ENCODE measurements at regions of chr3 and their contacts with region 1.

Region 1: DNA sequence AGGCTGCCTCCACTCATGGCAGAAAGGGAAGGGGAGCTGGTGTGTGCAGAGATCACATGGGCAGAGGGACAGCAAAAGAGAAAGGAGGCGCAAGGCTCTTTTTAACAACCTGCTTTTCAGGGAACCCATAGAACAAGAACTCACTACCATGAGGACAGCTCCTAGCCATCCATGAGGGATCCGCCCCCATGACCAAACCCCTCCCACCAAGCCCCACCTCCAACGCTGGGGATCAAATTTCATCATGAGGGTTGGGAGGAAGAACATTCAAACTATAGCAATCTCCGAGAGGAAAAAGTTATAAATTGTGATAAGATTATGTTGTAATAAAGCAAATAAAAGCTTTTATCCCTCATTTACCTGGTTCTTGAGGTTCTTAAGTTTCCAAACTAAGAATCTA is 84.7 kb upstream of the LMCD1 start:
- DNase-seq: peak; percentile 4
- H3K4me3 ChIP-seq: no peak overlapping the region
- H3K27ac ChIP-seq: no peak overlapping the region
- H3K4me1 ChIP-seq: no peaks in the 10 kb centered on the region
- CTCF ChIP-seq: no peak

Region 2: GRCh38 chr3:8111069-8111798 is 305.7 kb before region 1 on chr3:
- CTCF ChIA-PET with region 1: no interaction called
- POLR2A ChIA-PET with region 1: no interaction called
- intact Hi-C with region 1: loop called (anchors 10 kb)
- DNase-seq: peak; percentile 59
- H3K4me3 ChIP-seq: no peak overlapping the region
- H3K27ac ChIP-seq: no peak overlapping the region
- H3K4me1 ChIP-seq: peaks cover 4% of the 10 kb centered on the region
- CTCF ChIP-seq: peak; percentile 85

Region 3: DNA sequence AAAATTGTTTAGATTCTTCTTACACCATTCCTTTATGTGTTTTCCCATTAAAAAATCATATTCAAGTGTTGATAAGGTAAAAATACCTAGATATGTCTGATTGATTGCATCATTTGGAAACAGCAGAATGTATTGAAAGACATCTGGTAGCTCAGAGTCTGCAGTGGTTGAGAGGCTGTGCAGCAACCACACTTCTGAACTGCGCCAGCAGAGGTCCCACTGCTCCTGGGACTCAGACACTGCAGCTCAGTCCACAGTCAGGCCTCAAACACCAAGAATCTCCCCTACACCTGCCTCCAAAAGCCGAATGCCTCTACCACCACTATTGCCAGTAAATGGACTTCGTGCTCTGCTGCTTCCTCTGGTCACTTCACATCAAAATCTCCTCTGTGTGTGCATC is 92.2 kb before region 1 on chr3:
- CTCF ChIA-PET with region 1: interaction called, 8 read pairs
- POLR2A ChIA-PET with region 1: interaction called, 5 read pairs
- intact Hi-C with region 1: loop called (anchors 1 kb)
- DNase-seq: peak; percentile 47
- H3K4me3 ChIP-seq: no peak overlapping the region
- H3K27ac ChIP-seq: no peak overlapping the region
- H3K4me1 ChIP-seq: no peaks in the 10 kb centered on the region
- CTCF ChIP-seq: peak; percentile 74

Measured in OCI-LY7 (cell line).